PC-3 (cell line): ENCODE measurements at regions of chr6 and their contacts with region 1.

Region 1: DNA sequence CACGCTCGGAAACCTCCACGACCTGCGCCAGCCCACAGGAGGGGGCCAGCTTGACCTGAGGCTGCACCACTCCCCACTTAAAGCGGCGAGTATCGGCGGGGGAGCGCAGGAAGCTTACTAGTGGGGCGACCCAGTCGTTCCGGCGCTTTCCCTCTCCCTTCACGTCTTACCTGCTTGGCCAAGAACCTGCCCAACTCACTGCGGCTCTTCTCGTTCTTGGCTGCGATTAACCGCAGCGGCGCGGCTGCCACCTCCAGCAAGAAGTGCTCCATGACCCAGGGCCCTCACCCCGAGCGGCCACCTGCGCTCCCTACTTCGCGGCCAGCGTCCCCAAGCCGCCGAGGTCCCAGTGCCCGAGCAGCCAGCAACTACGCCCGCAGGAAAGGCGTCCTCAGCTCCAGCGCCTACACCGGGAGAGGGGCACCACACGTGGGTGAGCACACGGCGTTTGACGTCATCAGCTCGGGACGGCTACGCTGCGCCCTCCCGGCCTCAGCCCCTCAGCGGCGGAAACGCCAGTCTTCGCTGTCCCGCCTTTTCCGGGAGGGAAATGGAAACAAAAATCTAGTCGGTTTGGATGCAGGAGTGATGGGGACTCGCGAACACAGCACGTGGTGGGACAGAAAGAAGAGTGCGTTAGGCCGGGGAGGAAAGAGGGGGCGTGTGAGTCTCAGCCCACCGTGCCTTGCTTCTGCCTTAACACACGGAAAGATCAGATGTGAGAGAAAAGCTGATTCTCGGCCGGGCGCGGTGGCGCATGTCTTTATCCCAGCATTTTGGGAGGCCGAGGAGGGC is at the start of gene MDN1:
- DNase-seq: peak; percentile 94
- ATAC-seq: peak; percentile 94
- H3K4me3 ChIP-seq: peak within 1 kb of the TSS; percentile 99
- H3K27ac ChIP-seq: peak within 1 kb of the TSS; percentile 76
- H3K4me1 ChIP-seq: peaks cover 16% of the 10 kb centered on the region
- H3K27me3 ChIP-seq: no peaks in the 10 kb centered on the region
- CTCF ChIP-seq: no peak
- total RNA-seq, gene MDN1: 17.6 and 20.5 TPM in 2 replicates

Region 2: DNA sequence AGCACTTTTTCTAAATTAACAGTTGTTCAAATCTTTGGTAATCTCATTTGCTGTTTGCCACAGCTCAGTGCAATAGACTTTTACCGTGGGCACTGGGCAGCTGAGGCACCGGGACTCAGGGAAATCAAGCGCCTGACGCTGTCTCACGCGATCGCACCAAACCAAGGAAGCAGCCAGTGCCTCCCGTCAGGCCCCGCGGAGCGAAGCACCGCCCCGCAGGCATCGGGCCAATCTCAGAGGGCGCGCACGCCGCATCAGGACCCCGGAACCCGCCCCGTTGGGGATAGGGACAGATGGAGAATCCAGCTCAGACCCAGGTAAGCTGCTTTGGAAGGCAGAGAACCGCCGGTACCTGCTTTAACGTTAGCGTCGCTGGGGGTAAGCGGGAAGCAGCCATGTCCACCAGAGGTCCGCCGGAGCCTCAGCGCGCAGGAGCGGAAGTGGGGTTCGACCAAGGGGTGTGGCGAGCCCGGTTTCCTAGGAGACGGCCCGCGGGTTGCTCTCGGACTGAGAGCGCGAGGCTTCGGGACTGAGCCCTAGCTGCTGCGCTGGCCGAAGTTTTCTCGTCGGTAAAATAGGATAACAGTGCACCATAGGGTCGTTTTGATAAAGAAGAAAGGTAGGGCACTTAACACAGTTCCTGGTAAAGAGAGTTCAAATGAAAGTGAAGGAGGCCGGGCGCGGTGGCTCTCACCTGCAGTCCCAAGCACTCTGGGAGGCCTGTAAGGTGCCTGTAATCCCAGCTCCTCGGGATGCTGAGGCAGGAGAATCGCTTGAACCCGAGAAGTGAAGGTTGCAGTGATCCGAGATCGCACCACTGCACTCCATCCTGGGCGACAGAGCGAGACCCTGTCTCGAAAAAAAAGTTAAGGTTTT is 181.0 kb before region 1 on chr6 and contains the start of gene LYRM2:
- CTCF ChIA-PET with region 1: no interaction called
- POLR2A ChIA-PET with region 1: no interaction called
- intact Hi-C with region 1: loop called (anchors 1 kb)
- DNase-seq: peak; percentile 87
- ATAC-seq: peak; percentile 99
- H3K4me3 ChIP-seq: peak within 1 kb of the TSS; percentile 76
- H3K27ac ChIP-seq: peak within 1 kb of the TSS; percentile 76
- H3K4me1 ChIP-seq: peaks cover 9% of the 10 kb centered on the region; the same call in 1 of the 2 replicates
- H3K27me3 ChIP-seq: no peaks in the 10 kb centered on the region
- CTCF ChIP-seq: no peak
- total RNA-seq, gene LYRM2: 10.5 and 11.2 TPM in 2 replicates

Region 3: DNA sequence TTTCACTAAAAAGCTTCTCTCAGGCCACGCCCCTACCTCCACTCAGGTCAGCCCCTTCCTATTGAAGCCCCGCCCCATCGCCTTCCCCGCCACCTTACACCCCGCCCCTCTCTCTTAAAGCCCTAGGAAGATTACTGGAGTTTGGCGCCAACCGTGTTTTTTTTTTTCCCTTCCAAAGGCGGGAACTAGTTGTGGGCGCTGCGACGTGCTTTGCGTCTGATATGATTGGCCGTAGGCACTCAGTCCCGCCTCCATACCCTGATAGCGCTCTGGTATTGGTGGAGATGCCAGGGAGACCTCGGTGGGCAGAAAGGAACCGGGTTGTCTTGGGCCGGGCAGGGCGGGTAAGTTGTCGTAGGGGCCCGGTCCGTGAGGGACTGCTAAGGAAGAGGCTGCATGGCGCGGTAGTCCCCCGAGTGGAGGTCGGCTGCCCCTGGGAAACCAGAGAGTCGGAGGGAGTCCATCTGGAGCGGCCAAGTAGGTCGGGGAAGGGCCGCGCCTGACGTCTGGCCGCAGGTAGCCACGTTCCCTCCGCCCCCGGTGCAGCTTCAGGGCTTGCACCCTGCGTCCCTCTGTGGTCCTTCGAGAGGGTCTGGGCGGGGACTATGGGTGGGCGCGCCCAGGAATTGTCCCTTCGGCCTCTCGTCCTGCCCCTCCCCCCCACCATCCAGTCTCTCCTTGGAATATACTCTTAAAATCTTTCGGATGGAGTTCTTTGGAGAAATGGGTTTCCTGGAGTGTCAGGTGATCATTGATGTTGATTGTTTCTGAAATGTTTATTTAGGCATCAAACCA is 10.3 kb after region 1 on chr6 and contains the start of gene CASP8AP2:
- CTCF ChIA-PET with region 1: interaction called, 5 read pairs
- POLR2A ChIA-PET with region 1: interaction called, 11 read pairs
- intact Hi-C with region 1: no loop called
- DNase-seq: peak; percentile 97
- ATAC-seq: peak; percentile 97
- H3K4me3 ChIP-seq: peak within 1 kb of the TSS; percentile 87
- H3K27ac ChIP-seq: peak within 1 kb of the TSS; percentile 2; the same call in 1 of the 2 replicates
- H3K4me1 ChIP-seq: no peaks in the 10 kb centered on the region
- H3K27me3 ChIP-seq: no peaks in the 10 kb centered on the region
- CTCF ChIP-seq: no peak
- total RNA-seq, gene CASP8AP2: 6.6 and 7.8 TPM in 2 replicates